ENCODE measurements at regions of chr3 and their contacts with region 1.

Region 1: GRCh38 chr3:30751610-30752299 is 142.7 kb downstream of the GADL1 start:
- DNase-seq: peak; percentile 87
- H3K4me3 ChIP-seq: no peak overlapping the region
- H3K27ac ChIP-seq: peak overlapping the region; percentile 59
- H3K4me1 ChIP-seq: peaks cover 81% of the 10 kb centered on the region
- H3K27me3 ChIP-seq: no peaks in the 10 kb centered on the region
- CTCF ChIP-seq: peak; percentile 80

Region 2: DNA sequence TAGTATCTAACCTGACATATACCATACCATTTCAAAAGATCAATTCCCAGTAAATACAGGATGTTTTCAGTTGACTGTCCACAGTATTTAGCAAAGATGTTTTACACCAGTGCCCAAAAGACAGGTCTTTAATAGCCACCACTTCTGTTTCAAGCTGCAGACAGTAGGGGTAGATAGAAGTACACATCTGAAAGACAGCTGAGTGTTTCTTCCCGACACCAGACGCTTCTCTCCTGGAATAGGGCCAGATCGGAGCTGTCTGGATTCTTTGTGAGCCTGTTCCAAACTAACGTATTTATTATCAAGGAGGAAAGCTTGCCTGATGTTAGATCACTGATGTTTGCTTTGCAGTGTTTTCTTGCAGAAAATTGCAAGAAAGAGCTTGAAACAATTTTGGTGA is 1606.9 kb before region 1 on chr3:
- CTCF ChIA-PET with region 1: no interaction called
- POLR2A ChIA-PET with region 1: no interaction called
- intact Hi-C with region 1: loop called (anchors 5 kb)
- DNase-seq: peak; percentile 86
- H3K4me3 ChIP-seq: no peak overlapping the region
- H3K27ac ChIP-seq: no peak overlapping the region
- H3K4me1 ChIP-seq: peaks cover 21% of the 10 kb centered on the region
- H3K27me3 ChIP-seq: no peaks in the 10 kb centered on the region
- CTCF ChIP-seq: peak; percentile 62

Region 3: GRCh38 chr3:30012941-30013543 is 738.7 kb before region 1 on chr3:
- CTCF ChIA-PET with region 1: interaction called, 3 read pairs
- POLR2A ChIA-PET with region 1: no interaction called
- intact Hi-C with region 1: loop called (anchors 1 kb)
- DNase-seq: peak; percentile 92
- H3K4me3 ChIP-seq: no peak overlapping the region
- H3K27ac ChIP-seq: no peak overlapping the region
- H3K4me1 ChIP-seq: peaks cover 24% of the 10 kb centered on the region
- H3K27me3 ChIP-seq: no peaks in the 10 kb centered on the region
- CTCF ChIP-seq: peak; percentile 87

Region 4: DNA sequence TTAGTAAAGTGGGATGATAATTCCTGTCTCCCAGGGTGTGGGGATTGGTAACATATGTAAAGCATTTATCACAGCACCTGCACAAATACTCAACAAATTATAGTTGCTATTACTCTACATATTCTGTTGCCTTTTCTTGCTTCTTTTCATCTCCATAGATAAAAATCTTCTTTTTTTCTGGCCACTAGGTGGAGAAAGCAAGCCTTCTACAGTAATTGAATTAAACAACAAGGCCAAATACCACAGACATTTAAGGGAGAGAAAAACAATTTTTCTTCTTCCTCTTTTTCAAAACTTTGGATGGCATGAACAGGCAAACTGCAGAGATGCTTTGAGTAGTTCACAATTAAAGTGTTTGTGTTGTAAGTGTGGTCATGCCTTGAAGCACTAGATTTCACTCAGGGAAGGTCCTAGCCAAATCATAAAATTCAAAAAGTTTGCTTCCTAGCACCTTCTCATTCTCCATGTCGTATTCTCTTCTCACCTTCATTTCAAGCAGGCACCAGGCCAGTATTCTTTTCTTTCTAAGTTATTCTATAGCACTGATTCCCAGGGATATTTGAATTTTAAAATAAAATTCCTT is 638.8 kb before region 1 on chr3:
- CTCF ChIA-PET with region 1: no interaction called
- POLR2A ChIA-PET with region 1: no interaction called
- intact Hi-C with region 1: loop called (anchors 5 kb)
- DNase-seq: peak; percentile 79
- H3K4me3 ChIP-seq: no peak overlapping the region
- H3K27ac ChIP-seq: no peak overlapping the region
- H3K4me1 ChIP-seq: peaks cover 29% of the 10 kb centered on the region
- H3K27me3 ChIP-seq: no peaks in the 10 kb centered on the region
- CTCF ChIP-seq: peak; percentile 76

Region 5: GRCh38 chr3:30199096-30199759 is 552.5 kb before region 1 on chr3:
- CTCF ChIA-PET with region 1: interaction called, 3 read pairs
- POLR2A ChIA-PET with region 1: no interaction called
- intact Hi-C with region 1: loop called (anchors 5 kb)
- DNase-seq: peak; percentile 80
- H3K4me3 ChIP-seq: no peak overlapping the region
- H3K27ac ChIP-seq: no peak overlapping the region
- H3K4me1 ChIP-seq: peaks cover 13% of the 10 kb centered on the region
- H3K27me3 ChIP-seq: no peaks in the 10 kb centered on the region
- CTCF ChIP-seq: peak; percentile 85

Region 6: DNA sequence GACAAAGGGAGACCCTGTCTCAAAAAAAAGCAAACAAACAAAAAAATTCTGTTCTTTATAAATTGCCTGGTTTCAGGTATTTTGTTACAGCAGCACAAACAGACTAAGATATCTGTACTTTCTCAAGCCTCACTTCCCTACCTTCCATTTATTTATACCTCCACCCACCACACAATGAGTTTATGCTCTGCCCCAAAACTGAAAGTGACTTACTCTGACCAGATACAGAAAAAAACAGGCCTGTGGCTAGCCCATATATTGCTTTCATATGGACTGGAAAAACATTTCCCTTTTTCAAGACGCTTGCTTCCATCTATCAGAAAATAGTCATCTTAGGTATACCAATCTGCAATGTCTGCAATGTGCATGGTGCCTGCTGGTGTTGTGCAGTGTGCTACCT is 1346.0 kb after region 1 on chr3:
- CTCF ChIA-PET with region 1: no interaction called
- POLR2A ChIA-PET with region 1: no interaction called
- intact Hi-C with region 1: no loop called
- DNase-seq: no peak
- H3K4me3 ChIP-seq: no peak overlapping the region
- H3K27ac ChIP-seq: no peak overlapping the region
- H3K4me1 ChIP-seq: no peaks in the 10 kb centered on the region
- H3K27me3 ChIP-seq: no peaks in the 10 kb centered on the region
- CTCF ChIP-seq: no peak

Measured in A673 (cell line).